ENCODE measurements at regions of chr16 and their contacts with region 1.

Region 1: DNA sequence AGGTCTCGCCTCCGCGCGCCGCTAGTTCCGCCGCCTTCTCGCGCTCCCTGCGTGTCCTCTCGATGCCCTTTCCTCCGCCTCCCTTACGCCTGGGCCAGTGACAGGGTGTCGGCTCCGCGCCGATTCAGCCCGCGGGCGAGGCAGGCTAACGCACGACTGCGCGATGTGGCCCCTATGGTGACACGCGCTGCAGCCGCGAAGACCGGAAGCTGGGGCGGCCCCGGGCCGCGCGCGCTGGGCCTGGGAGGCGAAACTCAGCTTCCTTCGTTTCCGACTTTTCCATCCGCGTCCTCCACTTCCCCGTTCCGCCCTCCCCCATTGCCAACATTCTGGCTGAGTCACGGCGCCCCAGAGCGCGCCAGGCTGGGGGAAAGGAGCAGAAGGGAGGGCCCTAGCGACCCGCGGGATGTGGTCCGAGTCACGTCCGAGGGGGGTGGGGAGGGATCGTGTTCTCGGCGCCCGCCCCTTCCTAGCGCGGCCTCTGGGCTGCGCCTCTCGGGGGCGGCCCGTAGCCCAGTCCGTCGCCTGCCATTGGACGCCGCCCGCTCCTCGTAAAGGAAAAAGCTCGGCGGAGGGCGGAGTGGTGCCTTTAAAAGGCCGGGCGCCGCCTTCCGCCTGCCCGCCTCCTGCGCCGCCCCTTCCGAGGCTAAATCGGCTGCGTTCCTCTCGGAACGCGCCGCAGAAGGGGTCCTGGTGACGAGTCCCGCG is at the start of gene ALDOA:
- DNase-seq: peak; percentile 95 to 96
- H3K4me3 ChIP-seq: peak within 1 kb of the TSS; percentile 98
- H3K4me3 Mint-ChIP-seq: peak within 1 kb of the TSS; percentile 95
- H3K27ac Mint-ChIP-seq: peak within 1 kb of the TSS; percentile 97
- H3K4me1 ChIP-seq: peaks cover 8% of the 10 kb centered on the region; the same call in 1 of the 2 replicates
- H3K4me1 Mint-ChIP-seq: peaks cover 19% of the 10 kb centered on the region
- H3K27me3 ChIP-seq: no peaks in the 10 kb centered on the region
- H3K27me3 Mint-ChIP-seq: no peaks in the 10 kb centered on the region
- CTCF ChIP-seq: no peak
- total RNA-seq, gene ALDOA: 675 and 802 TPM in 2 replicates

Region 2: DNA sequence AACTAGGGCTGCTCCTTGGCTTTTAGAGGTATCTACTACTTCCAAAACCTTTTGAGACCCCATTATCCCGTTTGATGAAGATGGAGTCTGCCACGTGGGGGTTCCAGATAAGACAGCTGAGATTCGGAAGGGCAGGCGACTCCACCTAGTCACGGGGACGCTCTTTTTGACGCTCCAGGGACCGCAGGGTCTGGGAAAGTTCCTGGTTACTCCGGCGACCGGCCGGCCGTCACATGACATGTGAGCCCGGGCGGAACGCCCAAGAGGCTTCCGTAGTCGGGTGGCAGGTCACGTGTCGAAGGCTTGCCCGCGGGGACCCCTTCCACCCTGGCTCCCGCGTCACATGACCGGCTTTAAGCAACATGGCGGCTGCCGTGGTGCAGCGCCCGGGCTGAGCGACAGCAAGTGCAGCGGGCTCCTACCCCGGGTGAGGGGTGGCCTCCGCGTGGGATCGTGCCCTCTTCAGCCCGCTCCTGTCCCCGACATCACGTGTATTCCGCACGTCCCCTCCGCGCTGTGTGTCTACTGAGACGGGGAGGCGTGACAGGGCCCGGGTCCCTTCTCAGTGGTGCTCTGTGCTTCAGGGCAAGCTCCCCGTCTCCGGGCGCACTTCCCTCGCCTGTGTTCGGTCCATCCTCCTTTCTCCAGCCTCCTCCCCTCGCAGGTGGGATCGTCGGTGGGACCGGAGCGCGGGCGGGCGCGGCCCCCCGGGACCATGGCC is 1090.7 kb before region 1 on chr16 and contains the start of gene SPNS1:
- CTCF ChIA-PET with region 1: no interaction called
- POLR2A ChIA-PET with region 1: no interaction called
- intact Hi-C with region 1: loop called (anchors 5 kb)
- DNase-seq: peak; percentile 95
- H3K4me3 ChIP-seq: peak within 1 kb of the TSS; percentile 98
- H3K4me3 Mint-ChIP-seq: peak within 1 kb of the TSS; percentile 97
- H3K27ac Mint-ChIP-seq: peak within 1 kb of the TSS; percentile 96
- H3K4me1 ChIP-seq: 0 out of 2 replicates have a peak, but pooled peaks cover 6% of the 10 kb centered on the region
- H3K4me1 Mint-ChIP-seq: peaks cover 13% of the 10 kb centered on the region
- H3K27me3 ChIP-seq: no peaks in the 10 kb centered on the region
- H3K27me3 Mint-ChIP-seq: no peaks in the 10 kb centered on the region
- CTCF ChIP-seq: no peak
- total RNA-seq, gene SPNS1: 55.3 and 61.3 TPM in 2 replicates

Region 3: DNA sequence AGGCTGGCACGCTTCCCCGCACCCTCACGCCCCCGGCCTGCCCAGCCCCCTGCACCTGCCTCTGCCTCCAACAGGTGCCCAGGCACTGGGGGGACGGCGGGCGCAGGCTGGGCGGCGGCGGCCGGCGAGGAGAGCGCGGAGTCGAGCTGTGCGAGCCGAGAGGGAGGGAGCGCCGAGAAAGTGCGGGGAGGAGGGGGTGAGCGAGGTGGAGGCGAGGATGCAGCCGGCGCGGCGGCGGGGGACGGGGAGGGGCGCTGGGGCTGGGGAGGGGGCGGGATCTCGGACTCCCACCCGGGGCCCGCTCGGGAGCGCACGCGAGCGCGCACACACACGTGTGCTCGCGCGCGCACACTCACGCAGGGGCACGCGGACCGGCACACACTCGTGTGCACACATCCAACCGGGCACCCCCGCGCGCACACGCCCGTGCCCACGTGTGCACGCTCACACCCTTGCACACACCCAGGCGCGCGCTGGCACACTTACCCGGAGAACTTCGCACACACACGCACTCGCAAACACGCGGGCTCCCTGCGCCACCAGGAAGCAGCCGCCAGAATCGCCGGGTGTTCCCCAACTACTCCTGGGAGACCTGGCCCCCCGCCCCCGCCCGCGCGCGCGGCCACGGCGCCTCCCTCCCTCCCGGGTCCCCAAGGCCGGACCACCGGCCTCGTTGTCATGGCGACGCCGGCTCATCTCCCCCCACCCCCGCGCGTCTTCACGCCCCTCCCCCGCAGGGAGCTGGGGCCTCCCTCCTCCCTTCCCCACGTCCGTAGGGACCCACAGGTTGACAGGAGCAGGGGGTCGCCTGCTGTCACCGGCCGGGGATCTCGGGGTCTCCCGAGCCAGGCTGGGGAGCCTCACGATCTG is 54.2 kb before region 1 on chr16 and contains the start of gene DOC2A:
- CTCF ChIA-PET with region 1: no interaction called
- POLR2A ChIA-PET with region 1: no interaction called
- intact Hi-C with region 1: no loop called
- DNase-seq: peak in 1 of 2 experiments; percentile 32
- H3K4me3 ChIP-seq: peak within 1 kb of the TSS; percentile 83
- H3K4me3 Mint-ChIP-seq: peak within 1 kb of the TSS; percentile 68
- H3K27ac Mint-ChIP-seq: no peak within 1 kb of the TSS
- H3K4me1 ChIP-seq: no peaks in the 10 kb centered on the region
- H3K4me1 Mint-ChIP-seq: no peaks in the 10 kb centered on the region
- H3K27me3 ChIP-seq: no peaks in the 10 kb centered on the region
- H3K27me3 Mint-ChIP-seq: no peaks in the 10 kb centered on the region
- CTCF ChIP-seq: no peak
- total RNA-seq, gene DOC2A: 3.5 and 4.5 TPM in 2 replicates